Left cardiac atrium (tissue), 4 donors: ENCODE measurements at regions of chr9 and their contacts with region 1.

Region 1: GRCh38 chr9:37746848-37747753 is 6.5 kb upstream of the TRMT10B start:
- DNase-seq: peak; percentile 46
- ATAC-seq: peak; percentile 77 to 78

Region 2: GRCh38 chr9:37582548-37583157 is 164.4 kb before region 1 on chr9:
- intact Hi-C with region 1: loop called in 1 of 2 experiments (anchors 10 kb)
- DNase-seq: no peak
- ATAC-seq: peak; percentile 50 to 55

Region 3: DNA sequence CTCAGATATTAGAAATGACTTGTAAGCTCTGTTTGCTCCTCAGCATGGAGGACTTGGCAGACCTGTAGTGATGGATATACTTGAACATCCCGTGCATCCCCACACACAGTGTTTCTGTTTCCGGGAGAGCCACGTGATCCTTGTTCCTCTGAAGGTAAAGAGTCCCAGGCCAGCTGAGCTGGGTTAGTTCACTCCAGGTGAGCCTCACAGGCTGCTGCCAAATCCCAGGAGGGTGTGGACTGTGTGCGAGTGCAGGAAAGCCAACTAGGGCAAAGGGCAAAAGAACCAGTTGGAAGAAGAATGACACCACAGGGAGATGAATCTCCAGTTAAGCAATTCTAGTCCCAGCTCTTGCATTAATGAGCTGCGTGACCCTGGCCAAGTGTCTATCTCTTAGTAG is 144.3 kb before region 1 on chr9:
- intact Hi-C with region 1: loop called in 1 of 2 experiments (anchors 10 kb)
- DNase-seq: no peak
- ATAC-seq: peak; percentile 79 to 86

Region 4: GRCh38 chr9:38408719-38409118 is 661.6 kb after region 1 on chr9:
- intact Hi-C with region 1: loop called in 1 of 2 experiments (anchors 10 kb)
- DNase-seq: no peak
- ATAC-seq: no peak